ENCODE measurements at regions of chr6 and their contacts with region 1.

Region 1: DNA sequence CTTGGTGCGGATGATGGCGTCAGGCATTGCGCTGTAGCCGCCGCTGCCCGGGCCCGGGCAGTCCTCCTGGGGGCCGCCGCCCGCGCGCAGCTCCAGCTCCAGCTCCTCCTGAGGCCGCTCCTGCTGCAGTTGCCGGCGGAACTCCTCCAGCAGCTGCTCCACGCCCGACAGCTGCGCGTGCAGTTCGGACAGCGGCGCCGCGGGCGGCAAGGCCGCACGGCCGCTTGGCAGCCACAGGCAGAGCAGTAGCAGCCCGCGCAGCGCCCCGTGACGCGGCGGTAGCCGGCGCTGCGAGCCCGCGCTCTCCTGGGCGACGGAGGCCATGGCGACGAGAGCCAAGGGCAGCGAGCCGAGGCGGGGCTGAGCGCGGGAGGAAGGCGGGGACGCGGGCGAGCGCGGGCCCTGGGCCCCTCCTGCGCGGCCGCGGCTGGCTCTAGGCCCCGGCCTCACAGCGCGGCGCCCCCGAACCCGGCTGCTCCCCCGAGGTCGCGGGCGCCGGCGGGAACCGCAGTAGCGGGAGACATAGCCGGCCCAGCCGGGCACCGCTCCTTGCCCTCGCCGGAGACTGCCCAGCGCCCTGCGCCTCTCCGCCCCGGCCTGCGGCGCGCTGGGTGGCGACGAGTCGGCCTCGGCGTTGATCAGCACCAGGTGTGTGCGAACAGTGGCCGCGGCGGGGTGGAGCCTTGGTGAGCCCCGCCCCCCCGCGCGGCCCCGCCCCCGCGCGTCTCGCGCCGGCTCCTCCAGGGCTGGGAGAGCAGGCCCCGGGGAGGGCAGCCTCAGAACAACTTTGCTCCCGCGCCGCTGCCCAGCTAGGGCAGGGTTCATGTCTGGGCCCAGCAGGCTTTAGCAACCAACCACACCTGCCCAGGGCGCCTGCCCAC is at the start of gene LRP11:
- DNase-seq: peak; percentile 80
- H3K4me3 Mint-ChIP-seq: peak within 1 kb of the TSS; percentile 80
- H3K27ac Mint-ChIP-seq: no peak within 1 kb of the TSS
- H3K4me1 Mint-ChIP-seq: peaks cover 6% of the 10 kb centered on the region
- H3K27me3 Mint-ChIP-seq: peaks cover 12% of the 10 kb centered on the region
- total RNA-seq, gene LRP11: 4.6 to 4.7 TPM

Region 2: GRCh38 chr6:149484733-149485700 is 378.9 kb before region 1 on chr6 and contains the start of gene ZC3H12D:
- CTCF ChIA-PET with region 1: no interaction called
- intact Hi-C with region 1: loop called (anchors 5 kb)
- DNase-seq: peak; percentile 92
- H3K4me3 Mint-ChIP-seq: peak within 1 kb of the TSS; percentile 94
- H3K27ac Mint-ChIP-seq: peak within 1 kb of the TSS; percentile 97
- H3K4me1 Mint-ChIP-seq: peaks cover 59% of the 10 kb centered on the region
- H3K27me3 Mint-ChIP-seq: no peaks in the 10 kb centered on the region
- total RNA-seq, gene ZC3H12D: 75.8 to 82.7 TPM

Region 3: GRCh38 chr6:149565527-149566409 is 298.2 kb before region 1 on chr6 and contains the start of gene GINM1:
- CTCF ChIA-PET with region 1: no interaction called
- intact Hi-C with region 1: loop called (anchors 1 kb)
- DNase-seq: peak; percentile 97
- H3K4me3 Mint-ChIP-seq: peak within 1 kb of the TSS; percentile 92
- H3K27ac Mint-ChIP-seq: peak within 1 kb of the TSS; percentile 89
- H3K4me1 Mint-ChIP-seq: peaks cover 26% of the 10 kb centered on the region
- H3K27me3 Mint-ChIP-seq: no peaks in the 10 kb centered on the region
- total RNA-seq, gene GINM1: 17.6 to 18.4 TPM

Region 4: DNA sequence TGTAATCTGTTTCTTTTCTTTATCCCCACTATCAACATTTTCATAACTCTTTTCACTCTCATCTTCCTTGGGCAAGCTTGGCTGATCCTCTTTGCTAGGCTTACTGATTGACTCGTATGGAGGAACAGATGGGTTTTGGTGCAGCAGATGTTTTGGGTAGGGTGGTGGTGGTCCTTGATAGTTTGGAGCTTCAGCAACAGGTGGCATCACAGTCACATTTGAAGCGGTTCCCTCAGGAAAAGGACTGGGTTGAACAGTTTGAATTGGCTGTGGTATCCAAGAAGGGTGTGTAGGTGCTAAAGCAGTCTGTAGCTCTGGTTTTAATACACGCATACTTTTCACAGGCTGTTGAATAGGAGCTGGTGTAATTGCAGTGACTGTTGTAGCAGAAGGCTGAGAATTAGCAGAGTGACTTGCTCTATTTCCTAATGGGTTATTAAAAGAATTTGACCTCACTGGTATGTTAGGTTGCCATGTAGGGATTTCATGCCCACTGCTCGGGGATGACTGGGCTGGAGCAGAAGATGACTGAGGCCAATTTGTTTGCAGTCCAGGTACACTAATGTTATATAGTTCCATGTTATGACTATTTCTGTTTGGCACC is 180.6 kb before region 1 on chr6:
- CTCF ChIA-PET with region 1: no interaction called
- intact Hi-C with region 1: no loop called
- DNase-seq: no peak
- H3K4me3 Mint-ChIP-seq: no peak overlapping the region
- H3K27ac Mint-ChIP-seq: no peak overlapping the region
- H3K4me1 Mint-ChIP-seq: peaks cover 25% of the 10 kb centered on the region
- H3K27me3 Mint-ChIP-seq: no peaks in the 10 kb centered on the region

Region 5: GRCh38 chr6:149746147-149746946 is 117.6 kb before region 1 on chr6 and contains the start of gene NUP43:
- CTCF ChIA-PET with region 1: no interaction called
- intact Hi-C with region 1: loop called (anchors 1 kb)
- DNase-seq: peak; percentile 99
- H3K4me3 Mint-ChIP-seq: peak within 1 kb of the TSS; percentile 99
- H3K27ac Mint-ChIP-seq: peak within 1 kb of the TSS; percentile 87
- H3K4me1 Mint-ChIP-seq: peaks cover 31% of the 10 kb centered on the region
- H3K27me3 Mint-ChIP-seq: no peaks in the 10 kb centered on the region
- total RNA-seq, gene NUP43: 68.1 to 71.9 TPM

Region 6: GRCh38 chr6:149840345-149841075 is 23.4 kb before region 1 on chr6:
- CTCF ChIA-PET with region 1: interaction called, 11 read pairs
- intact Hi-C with region 1: loop called (anchors 1 kb)
- DNase-seq: peak; percentile 82
- H3K4me3 Mint-ChIP-seq: no peak overlapping the region
- H3K27ac Mint-ChIP-seq: no peak overlapping the region
- H3K4me1 Mint-ChIP-seq: no peaks in the 10 kb centered on the region
- H3K27me3 Mint-ChIP-seq: no peaks in the 10 kb centered on the region

Region 7: DNA sequence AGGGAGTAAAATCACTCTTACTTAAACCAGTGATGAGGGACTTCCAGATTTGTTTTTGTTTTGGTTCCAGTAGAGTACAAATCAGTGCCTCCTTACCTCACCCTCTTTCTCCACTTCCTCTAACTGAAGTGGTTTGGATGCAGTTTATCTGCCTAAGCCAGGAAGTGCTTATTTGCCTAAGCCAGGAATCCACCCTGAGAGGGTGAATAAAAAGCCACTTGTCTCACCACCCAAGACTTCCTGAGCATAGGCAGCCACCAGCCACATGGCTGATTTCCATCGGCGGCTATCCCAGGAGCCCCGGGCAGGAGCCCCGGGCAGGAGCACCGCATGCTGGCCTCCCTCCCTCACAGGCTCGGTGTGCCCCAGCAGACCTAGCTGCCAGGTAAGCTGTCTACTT is 11.8 kb before region 1 on chr6:
- CTCF ChIA-PET with region 1: interaction called, 12 read pairs
- intact Hi-C with region 1: loop called (anchors 1 kb)
- DNase-seq: peak; percentile 30
- H3K4me3 Mint-ChIP-seq: no peak overlapping the region
- H3K27ac Mint-ChIP-seq: no peak overlapping the region
- H3K4me1 Mint-ChIP-seq: peaks cover 13% of the 10 kb centered on the region
- H3K27me3 Mint-ChIP-seq: no peaks in the 10 kb centered on the region

Region 8: GRCh38 chr6:149925974-149926777 is 62.2 kb after region 1 on chr6:
- CTCF ChIA-PET with region 1: interaction called, 3 read pairs
- intact Hi-C with region 1: loop called (anchors 1 kb)
- DNase-seq: peak; percentile 93
- H3K4me3 Mint-ChIP-seq: peak overlapping the region; percentile 44
- H3K27ac Mint-ChIP-seq: no peak overlapping the region
- H3K4me1 Mint-ChIP-seq: peaks cover 15% of the 10 kb centered on the region
- H3K27me3 Mint-ChIP-seq: peaks cover 78% of the 10 kb centered on the region

Measured in activated naive CD4-positive, alpha-beta T cell treated with anti-CD3 and anti-CD28 coated beads for 36 hours (primary cell).